ENCODE measurements at regions of chr9 and their contacts with region 1.

Region 1: DNA sequence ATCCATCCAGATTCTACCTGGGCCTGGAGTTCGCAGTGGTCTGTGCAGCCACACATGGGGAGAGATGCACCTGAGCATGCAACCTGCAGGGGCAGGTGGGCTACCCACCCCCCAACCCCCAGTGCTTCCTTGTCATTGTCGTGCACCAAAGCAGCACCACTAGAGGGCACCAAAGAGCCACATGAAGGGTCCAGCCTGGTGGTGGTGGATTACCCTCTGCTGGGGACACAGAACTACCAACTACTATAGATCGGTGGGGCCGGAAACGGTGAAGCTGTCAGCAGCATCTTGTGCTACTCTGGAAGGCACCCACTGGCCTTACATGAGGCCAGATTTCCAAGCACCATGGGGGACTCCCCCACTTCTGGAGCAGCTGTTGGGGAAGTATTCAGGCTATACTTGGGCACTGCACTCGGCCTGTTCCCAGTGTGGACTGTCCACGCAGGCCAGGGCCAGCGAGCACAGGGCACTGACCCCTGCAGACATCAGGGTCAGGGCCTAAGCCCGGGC is 60.2 kb upstream of the TBC1D2 start:
- DNase-seq: peak; percentile 62
- H3K4me3 Mint-ChIP-seq: no peak overlapping the region
- H3K27ac Mint-ChIP-seq: no peak overlapping the region
- H3K4me1 Mint-ChIP-seq: peaks cover 6% of the 10 kb centered on the region
- H3K27me3 Mint-ChIP-seq: peaks cover 4% of the 10 kb centered on the region

Region 2: GRCh38 chr9:98263482-98264357 is 51.9 kb before region 1 on chr9:
- intact Hi-C with region 1: no loop called
- DNase-seq: peak; percentile 72
- H3K4me3 Mint-ChIP-seq: no peak overlapping the region
- H3K27ac Mint-ChIP-seq: no peak overlapping the region
- H3K4me1 Mint-ChIP-seq: no peaks in the 10 kb centered on the region
- H3K27me3 Mint-ChIP-seq: peaks cover 9% of the 10 kb centered on the region

Region 3: DNA sequence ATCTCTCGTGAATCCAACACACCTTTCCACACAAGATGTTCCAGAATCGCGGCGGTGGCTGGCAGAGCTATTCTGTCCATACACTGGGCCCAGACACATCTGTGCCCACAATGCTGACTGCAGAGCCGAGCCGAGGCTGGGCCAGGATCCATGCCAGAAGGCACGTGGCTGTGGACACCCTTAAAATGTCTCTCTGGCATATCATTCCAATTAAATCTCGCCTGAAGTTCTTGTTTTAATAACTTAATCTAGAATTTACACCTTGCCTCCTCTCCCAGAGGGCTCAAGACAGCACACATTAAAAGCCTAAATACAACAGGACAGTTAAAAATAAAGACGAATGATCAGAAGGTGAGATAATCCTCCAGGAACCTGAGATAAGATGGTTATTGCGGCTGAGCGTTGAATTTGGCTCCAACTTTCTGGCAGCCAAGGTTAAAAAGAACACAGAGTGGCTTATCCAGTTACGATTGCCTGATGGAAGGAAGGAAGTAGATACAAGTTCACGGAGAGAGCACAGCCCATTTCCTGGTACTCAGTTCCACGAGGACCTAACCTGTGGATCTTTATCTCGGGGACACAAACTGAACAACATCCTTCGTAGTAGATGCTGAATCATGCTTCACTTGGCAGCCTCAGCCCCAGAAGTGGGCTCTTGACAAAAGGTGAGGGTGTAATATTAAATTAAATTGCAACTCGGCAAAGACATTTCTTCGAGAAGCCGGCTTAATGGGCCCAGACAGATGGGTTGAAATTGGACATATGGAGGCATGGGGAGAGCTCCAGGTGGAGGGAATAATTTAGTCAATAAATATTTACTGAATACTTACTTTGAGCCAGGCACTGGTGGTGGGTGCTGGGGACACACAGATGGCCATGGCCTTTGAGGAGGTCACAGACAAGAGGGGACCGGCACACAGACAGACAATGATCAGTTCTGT is 25.8 kb after region 1 on chr9:
- intact Hi-C with region 1: no loop called
- DNase-seq: no peak
- H3K4me3 Mint-ChIP-seq: no peak overlapping the region
- H3K27ac Mint-ChIP-seq: no peak overlapping the region
- H3K4me1 Mint-ChIP-seq: no peaks in the 10 kb centered on the region
- H3K27me3 Mint-ChIP-seq: peaks cover 24% of the 10 kb centered on the region

Region 4: DNA sequence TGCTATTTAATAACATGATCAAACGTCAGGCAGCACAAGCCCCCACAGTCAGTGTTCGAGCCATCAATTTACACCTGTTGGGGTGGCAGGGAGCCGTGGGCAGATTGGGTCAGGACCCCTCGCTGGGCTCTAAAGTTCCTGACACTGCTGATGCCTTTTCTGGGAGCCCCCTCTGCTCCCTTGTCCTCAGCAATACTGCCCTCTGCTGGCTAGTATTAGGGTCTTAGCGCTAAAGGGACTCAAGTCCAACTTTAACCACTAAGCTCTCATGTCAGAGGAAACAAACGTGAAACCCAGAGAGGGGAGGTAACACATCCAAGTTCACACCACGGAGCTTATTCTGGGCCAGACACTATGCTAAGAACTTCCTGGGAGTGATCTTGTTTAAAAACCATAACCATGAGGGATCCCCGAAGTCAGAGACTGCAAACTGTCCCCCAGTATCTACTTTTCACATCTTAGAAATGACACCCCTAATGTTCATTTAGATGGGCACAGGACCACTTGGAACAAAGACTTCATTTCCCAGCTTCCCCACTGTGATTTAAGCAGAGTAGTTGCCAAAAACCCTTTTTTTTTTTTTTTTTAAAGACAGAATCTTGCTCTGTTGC is 460.3 kb after region 1 on chr9:
- intact Hi-C with region 1: loop called (anchors 1 kb)
- DNase-seq: no peak
- H3K4me3 Mint-ChIP-seq: no peak overlapping the region
- H3K27ac Mint-ChIP-seq: no peak overlapping the region
- H3K4me1 Mint-ChIP-seq: no peaks in the 10 kb centered on the region
- H3K27me3 Mint-ChIP-seq: no peaks in the 10 kb centered on the region

Region 5: DNA sequence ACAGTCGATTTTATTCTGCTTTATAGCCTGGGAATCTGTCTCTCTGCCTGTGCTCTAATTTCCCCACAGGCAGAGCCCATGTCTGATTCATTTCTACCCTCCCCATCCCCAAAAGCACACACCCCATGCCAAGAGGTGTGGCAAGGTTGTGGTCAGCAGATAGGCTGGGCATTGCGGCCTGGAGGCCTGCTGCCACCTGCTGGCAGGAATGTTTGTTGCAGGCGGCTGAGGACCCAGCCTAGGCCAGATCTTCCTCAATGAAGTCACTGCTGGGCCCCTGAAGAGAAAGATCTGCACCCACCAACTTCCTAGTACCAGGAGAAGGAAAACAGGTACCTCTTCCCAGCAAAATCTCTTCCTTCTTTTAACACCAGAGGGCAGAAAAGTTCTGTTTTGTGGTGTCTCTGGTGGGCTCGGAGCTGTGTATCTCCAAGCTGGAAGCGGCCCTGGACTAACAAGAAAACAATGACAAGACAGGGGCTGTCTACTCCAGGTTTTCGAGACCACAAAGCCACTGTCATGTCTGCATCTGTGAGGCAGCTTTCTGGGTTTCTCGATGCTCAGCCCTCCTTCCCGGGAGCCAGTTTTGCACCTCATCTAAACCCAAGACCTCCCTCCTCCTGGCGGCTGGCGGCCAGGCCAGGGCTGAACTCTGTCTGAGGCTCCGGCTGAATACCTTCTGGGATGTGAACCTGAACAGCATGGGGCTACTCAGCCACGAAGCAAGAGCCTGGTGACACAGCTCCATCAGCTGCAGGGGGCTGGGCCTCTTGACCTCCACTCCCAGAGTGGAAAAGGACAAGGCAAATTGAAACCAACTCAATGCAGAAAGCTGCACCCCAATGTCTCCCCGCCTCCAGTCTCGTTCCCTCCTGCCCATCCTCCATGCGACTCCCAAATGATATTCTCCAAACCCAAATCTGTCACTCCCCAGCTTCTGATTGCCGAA is 475.8 kb after region 1 on chr9:
- intact Hi-C with region 1: loop called (anchors 1 kb)
- DNase-seq: peak; percentile 44
- H3K4me3 Mint-ChIP-seq: no peak overlapping the region
- H3K27ac Mint-ChIP-seq: no peak overlapping the region
- H3K4me1 Mint-ChIP-seq: peaks cover 14% of the 10 kb centered on the region
- H3K27me3 Mint-ChIP-seq: peaks cover 9% of the 10 kb centered on the region